GM12878 (cell line): ENCODE measurements at regions of chr6 and their contacts with region 1.

Region 1: GRCh38 chr6:142819603-142820337 is 125.2 kb downstream of the HIVEP2 start:
- DNase-seq: peak; percentile 90
- ATAC-seq: peak; percentile 67
- H3K4me3 ChIP-seq: peak overlapping the region; percentile 39; the same call in 1 of the 2 replicates
- H3K27ac ChIP-seq: peak overlapping the region; percentile 88
- H3K4me1 ChIP-seq: peaks cover 40% of the 10 kb centered on the region
- H3K27me3 ChIP-seq: no peaks in the 10 kb centered on the region
- CTCF ChIP-seq: no peak
- EP300 ChIP-seq: peak; percentile 51 to 97
- POLR2A ChIP-seq: no peak
- RAD21 ChIP-seq: 0 out of 2 replicates have a peak, but pooled peaks have one; percentile 4

Region 2: DNA sequence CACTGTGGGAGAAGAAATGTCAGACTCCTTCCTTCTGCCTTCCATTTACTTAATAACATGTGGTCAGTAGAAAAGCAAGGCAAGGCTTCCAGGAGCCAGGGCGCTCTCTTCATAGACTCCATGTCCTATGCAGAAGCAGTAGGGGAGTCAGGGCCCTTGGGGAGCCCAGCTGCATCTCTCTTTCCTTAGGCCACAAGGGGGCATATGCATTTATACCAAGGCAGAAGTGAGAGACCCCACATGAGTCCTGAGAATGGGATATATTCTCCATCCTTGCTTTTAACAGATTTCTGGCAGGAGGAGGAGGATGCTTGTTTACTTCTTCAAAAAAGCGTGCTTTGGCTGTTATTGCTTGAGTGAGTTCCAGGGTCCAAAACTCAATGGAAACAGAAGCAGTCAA is 73.2 kb before region 1 on chr6:
- CTCF ChIA-PET with region 1: interaction called, 22 read pairs
- POLR2A ChIA-PET with region 1: no interaction called
- RAD21 ChIA-PET with region 1: interaction called, 7 read pairs
- SMC1A ChIA-PET with region 1: interaction called, 13 read pairs
- in situ Hi-C with region 1: no loop called
- intact Hi-C with region 1: no loop called
- DNase-seq: no peak
- ATAC-seq: peak; percentile 92
- H3K4me3 ChIP-seq: no peak overlapping the region
- H3K27ac ChIP-seq: no peak overlapping the region
- H3K4me1 ChIP-seq: no peaks in the 10 kb centered on the region
- H3K27me3 ChIP-seq: no peaks in the 10 kb centered on the region
- CTCF ChIP-seq: peak; percentile 46 to 60 (median 56); a peak in 5 of 6 replicates
- EP300 ChIP-seq: no peak
- POLR2A ChIP-seq: no peak
- RAD21 ChIP-seq: peak; percentile 67

Region 3: GRCh38 chr6:142796571-142796970 is 23.2 kb before region 1 on chr6:
- CTCF ChIA-PET with region 1: interaction called, 31 read pairs
- POLR2A ChIA-PET with region 1: interaction called, 4 read pairs
- RAD21 ChIA-PET with region 1: interaction called, 209 read pairs
- SMC1A ChIA-PET with region 1: interaction called, 115 read pairs
- in situ Hi-C with region 1: no loop called
- intact Hi-C with region 1: no loop called
- DNase-seq: no peak
- ATAC-seq: no peak
- H3K4me3 ChIP-seq: no peak overlapping the region
- H3K27ac ChIP-seq: no peak overlapping the region
- H3K4me1 ChIP-seq: peaks cover 17% of the 10 kb centered on the region
- H3K27me3 ChIP-seq: no peaks in the 10 kb centered on the region
- CTCF ChIP-seq: no peak
- EP300 ChIP-seq: no peak
- POLR2A ChIP-seq: no peak
- RAD21 ChIP-seq: no peak

Region 4: GRCh38 chr6:142838821-142839685 is 19.3 kb after region 1 on chr6:
- CTCF ChIA-PET with region 1: interaction called, 108 read pairs
- POLR2A ChIA-PET with region 1: interaction called, 67 read pairs
- RAD21 ChIA-PET with region 1: interaction called, 374 read pairs
- SMC1A ChIA-PET with region 1: interaction called, 449 read pairs
- in situ Hi-C with region 1: no loop called
- intact Hi-C with region 1: loop called (anchors 1 kb)
- DNase-seq: no peak
- ATAC-seq: peak; percentile 45
- H3K4me3 ChIP-seq: no peak overlapping the region
- H3K27ac ChIP-seq: peak overlapping the region; percentile 71
- H3K4me1 ChIP-seq: peaks cover 42% of the 10 kb centered on the region
- H3K27me3 ChIP-seq: no peaks in the 10 kb centered on the region
- CTCF ChIP-seq: no peak
- EP300 ChIP-seq: peak; percentile 9 to 65; a peak in 2 of 4 replicates
- POLR2A ChIP-seq: no peak
- RAD21 ChIP-seq: no peak

Region 5: DNA sequence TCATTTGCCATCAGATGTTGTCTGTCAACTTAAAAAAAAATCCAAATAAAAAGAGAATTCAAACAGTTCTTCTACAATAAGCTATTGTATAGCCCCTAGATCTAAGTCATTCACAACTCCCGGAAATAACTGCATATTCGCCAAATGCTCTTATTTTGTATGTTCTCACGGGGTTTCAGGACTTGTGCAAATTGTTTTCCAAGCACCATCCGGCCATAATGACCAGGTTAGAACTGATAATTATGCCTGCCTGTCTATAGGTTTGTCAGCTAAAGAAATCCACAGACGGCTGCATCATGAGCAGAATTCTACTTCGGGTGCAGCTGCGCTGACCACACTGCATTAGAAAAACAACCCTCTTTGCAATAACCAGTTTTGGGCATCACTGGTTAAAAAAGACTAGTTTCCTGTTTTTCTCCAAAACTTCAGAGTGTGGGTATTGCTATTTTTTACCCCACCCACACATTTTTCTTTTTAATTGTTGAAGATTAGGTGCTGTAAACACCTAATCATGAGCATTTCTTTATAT is 37.5 kb after region 1 on chr6:
- CTCF ChIA-PET with region 1: interaction called, 3 read pairs
- POLR2A ChIA-PET with region 1: interaction called, 7 read pairs
- RAD21 ChIA-PET with region 1: interaction called, 41 read pairs
- SMC1A ChIA-PET with region 1: interaction called, 42 read pairs
- in situ Hi-C with region 1: no loop called
- intact Hi-C with region 1: loop called (anchors 5 kb)
- DNase-seq: no peak
- ATAC-seq: peak; percentile 58
- H3K4me3 ChIP-seq: peak overlapping the region; percentile 59; the same call in 1 of the 2 replicates
- H3K27ac ChIP-seq: peak overlapping the region; percentile 98
- H3K4me1 ChIP-seq: peaks cover 54% of the 10 kb centered on the region
- H3K27me3 ChIP-seq: no peaks in the 10 kb centered on the region
- CTCF ChIP-seq: no peak
- EP300 ChIP-seq: peak in 1 of 2 experiments; percentile 57; a peak in 1 of 4 replicates
- POLR2A ChIP-seq: 0 out of 2 replicates have a peak, but pooled peaks have one; percentile 3
- RAD21 ChIP-seq: no peak

Region 6: DNA sequence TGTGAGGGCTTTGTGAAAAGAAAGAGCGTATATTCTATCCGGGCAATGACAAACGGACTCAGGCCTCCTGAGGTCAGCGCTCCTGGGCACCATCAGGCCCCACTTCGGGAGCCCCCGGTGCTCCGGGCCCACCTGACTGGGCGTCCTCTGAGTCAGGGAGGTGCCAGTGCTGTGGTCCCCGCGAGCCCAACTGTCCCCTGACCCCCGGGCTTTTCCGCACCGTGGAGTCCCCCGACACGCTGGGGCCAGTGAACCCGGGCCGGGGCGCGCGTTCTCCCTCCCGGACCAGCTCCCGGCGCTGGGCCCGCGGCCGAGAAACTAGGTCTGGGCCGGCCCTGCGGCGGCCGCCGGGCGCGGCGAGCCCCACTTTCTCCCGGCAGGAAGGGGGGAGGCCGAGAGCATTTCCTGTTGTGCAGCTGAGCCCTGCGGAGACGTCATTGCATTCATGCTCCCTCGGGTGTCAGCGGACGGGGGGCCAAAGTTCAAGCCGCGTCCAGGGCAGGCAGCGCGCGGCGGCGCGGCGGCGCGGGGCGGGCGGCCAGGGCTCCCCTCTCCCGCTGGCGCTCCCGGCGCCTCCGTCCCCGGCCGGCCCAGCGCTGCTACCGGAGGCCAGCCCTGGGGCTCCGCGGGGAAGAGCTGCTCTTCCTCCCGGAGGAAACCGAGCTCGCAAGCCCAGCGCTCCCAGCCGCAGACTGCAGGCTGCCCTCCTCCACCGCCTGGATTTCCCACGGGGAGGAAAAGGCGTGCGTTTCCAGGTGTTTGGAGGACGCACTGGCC is 106.9 kb after region 1 on chr6:
- CTCF ChIA-PET with region 1: no interaction called
- POLR2A ChIA-PET with region 1: interaction called, 7 read pairs
- RAD21 ChIA-PET with region 1: interaction called, 23 read pairs
- SMC1A ChIA-PET with region 1: interaction called, 5 read pairs
- in situ Hi-C with region 1: no loop called
- intact Hi-C with region 1: no loop called
- DNase-seq: no peak
- ATAC-seq: peak; percentile 80
- H3K4me3 ChIP-seq: peak overlapping the region; percentile 88
- H3K27ac ChIP-seq: peak overlapping the region; percentile 97
- H3K4me1 ChIP-seq: peaks cover 8% of the 10 kb centered on the region
- H3K27me3 ChIP-seq: no peaks in the 10 kb centered on the region
- CTCF ChIP-seq: no peak
- EP300 ChIP-seq: peak; percentile 64 to 66; a peak in 2 of 4 replicates
- POLR2A ChIP-seq: peak; percentile 86
- RAD21 ChIP-seq: no peak

Region 7: GRCh38 chr6:143759666-143760065 is 939.9 kb after region 1 on chr6:
- CTCF ChIA-PET with region 1: no interaction called
- POLR2A ChIA-PET with region 1: no interaction called
- RAD21 ChIA-PET with region 1: no interaction called
- SMC1A ChIA-PET with region 1: no interaction called
- in situ Hi-C with region 1: no loop called
- intact Hi-C with region 1: no loop called
- DNase-seq: no peak
- ATAC-seq: no peak
- H3K4me3 ChIP-seq: no peak overlapping the region
- H3K27ac ChIP-seq: no peak overlapping the region
- H3K4me1 ChIP-seq: no peaks in the 10 kb centered on the region
- H3K27me3 ChIP-seq: no peaks in the 10 kb centered on the region
- CTCF ChIP-seq: no peak
- EP300 ChIP-seq: no peak
- POLR2A ChIP-seq: no peak
- RAD21 ChIP-seq: no peak